ENCODE measurements at regions of chr12 and their contacts with region 1.

Region 1: DNA sequence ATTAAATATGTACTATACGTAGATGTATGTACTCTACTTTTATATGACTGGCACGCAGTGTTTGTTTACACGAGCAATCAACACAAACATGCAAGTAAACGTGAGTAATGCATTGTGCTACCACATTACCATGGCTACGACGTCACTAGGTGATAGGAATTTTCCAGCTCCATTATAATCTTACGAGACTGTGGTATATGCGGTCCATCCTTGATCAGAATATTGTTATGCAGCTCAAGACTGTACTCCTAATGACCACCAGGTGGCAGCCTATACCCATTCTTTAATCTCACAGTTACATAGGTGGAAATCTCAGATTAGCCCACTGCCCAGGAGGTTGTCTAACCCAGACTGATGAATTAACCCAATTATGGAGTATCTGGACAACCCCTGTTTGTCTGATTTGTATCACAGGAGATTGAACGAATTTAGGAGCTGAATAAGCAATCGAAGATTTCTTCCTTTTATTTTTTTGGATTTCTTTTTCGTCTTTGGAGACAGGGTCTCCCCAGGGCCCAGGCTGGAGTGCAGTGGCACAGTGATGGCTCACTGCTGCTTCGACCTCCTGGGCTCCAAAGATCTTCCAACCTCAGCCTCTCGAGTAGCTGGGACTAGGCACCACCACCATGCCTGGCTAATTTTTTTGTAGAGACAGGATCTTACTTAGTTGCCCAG is 8.7 kb upstream of the TESPA1 start:
- DNase-seq: peak in 3 of 5 donors; percentile 17 to 51 (median 23)
- H3K4me3 ChIP-seq: no peak overlapping the region
- H3K27ac ChIP-seq: no peak overlapping the region
- H3K4me1 ChIP-seq: peaks cover 4% of the 10 kb centered on the region
- H3K27me3 ChIP-seq: no peaks in the 10 kb centered on the region
- CTCF ChIP-seq: peak; percentile 70 to 87 (median 73)
- EP300 ChIP-seq: no peak
- POLR2A ChIP-seq: no peak

Region 2: GRCh38 chr12:54786081-54786480 is 207.2 kb before region 1 on chr12:
- intact Hi-C with region 1: no loop called
- DNase-seq: no peak
- H3K4me3 ChIP-seq: no peak overlapping the region
- H3K27ac ChIP-seq: no peak overlapping the region
- H3K4me1 ChIP-seq: no peaks in the 10 kb centered on the region
- H3K27me3 ChIP-seq: no peaks in the 10 kb centered on the region
- CTCF ChIP-seq: no peak
- EP300 ChIP-seq: no peak
- POLR2A ChIP-seq: no peak

Region 3: GRCh38 chr12:54935235-54935951 is 57.9 kb before region 1 on chr12:
- intact Hi-C with region 1: no loop called
- DNase-seq: no peak
- H3K4me3 ChIP-seq: no peak overlapping the region
- H3K27ac ChIP-seq: no peak overlapping the region
- H3K4me1 ChIP-seq: no peaks in the 10 kb centered on the region
- H3K27me3 ChIP-seq: no peaks in the 10 kb centered on the region
- CTCF ChIP-seq: no peak
- EP300 ChIP-seq: no peak
- POLR2A ChIP-seq: no peak

Region 4: DNA sequence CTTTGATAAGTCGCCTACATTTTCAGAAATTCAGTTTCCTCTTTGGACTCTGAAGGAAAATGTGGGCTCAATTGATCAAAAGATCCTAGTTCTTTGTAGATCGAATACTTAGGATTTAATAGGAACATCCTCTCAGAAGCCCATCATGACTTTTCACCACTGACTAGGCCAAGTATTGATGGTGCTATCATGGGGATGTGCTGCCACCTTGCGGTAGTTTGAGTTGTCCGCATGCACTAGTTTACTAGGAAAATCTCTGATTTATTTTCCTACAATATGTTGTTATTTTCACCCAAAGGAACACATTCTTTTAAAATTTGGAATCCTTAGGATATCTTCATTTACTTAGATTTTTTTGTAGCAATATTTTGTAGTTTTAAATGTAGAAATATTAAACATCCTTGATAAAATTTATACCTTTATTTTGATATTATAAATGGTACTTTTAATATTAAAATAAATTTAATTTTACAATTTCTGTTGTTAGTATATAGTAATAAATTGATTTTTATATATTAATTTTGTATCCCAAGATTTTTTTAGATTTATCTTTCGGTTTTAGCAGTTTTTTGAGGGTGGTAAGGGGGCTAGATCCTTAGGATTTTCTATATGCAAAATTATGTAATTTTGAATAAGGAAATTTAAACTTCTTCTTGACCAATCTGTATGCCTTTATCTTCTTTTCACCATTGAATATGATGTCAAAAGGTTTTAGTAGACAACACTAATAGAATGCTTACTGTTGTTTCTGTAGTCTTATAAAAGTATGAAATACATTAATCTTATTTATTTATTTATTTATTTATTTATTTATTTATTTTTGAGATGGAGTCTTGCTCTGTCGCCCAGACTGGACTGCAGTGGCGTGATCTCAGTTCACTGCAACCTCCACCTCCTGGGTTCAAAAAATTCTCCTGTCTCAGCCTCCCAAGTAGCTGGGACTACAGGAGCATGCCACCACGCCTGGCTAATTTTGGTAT is 80.0 kb after region 1 on chr12:
- intact Hi-C with region 1: loop called in 3 of 4 experiments (anchors 5 kb)
- DNase-seq: peak; percentile 46 to 75 (median 66)
- H3K4me3 ChIP-seq: no peak overlapping the region
- H3K27ac ChIP-seq: no peak overlapping the region
- H3K4me1 ChIP-seq: no peaks in the 10 kb centered on the region
- H3K27me3 ChIP-seq: no peaks in the 10 kb centered on the region
- CTCF ChIP-seq: peak; percentile 60 to 65 (median 63)
- EP300 ChIP-seq: no peak
- POLR2A ChIP-seq: no peak

Region 5: GRCh38 chr12:55142669-55143565 is 149.6 kb after region 1 on chr12:
- intact Hi-C with region 1: loop called in 1 of 4 experiments (anchors 10 kb)
- DNase-seq: peak in 1 of 5 donors; percentile 21
- H3K4me3 ChIP-seq: no peak overlapping the region
- H3K27ac ChIP-seq: no peak overlapping the region
- H3K4me1 ChIP-seq: no peaks in the 10 kb centered on the region
- H3K27me3 ChIP-seq: no peaks in the 10 kb centered on the region
- CTCF ChIP-seq: no peak
- EP300 ChIP-seq: no peak
- POLR2A ChIP-seq: no peak

Measured in ovary (tissue), 10 donors.